Lower leg skin (tissue), 4 donors: ENCODE measurements at regions of chr2 and their contacts with region 1.

Region 1: GRCh38 chr2:27281855-27282559 is at the start of gene TRIM54:
- DNase-seq: no peak
- H3K4me3 ChIP-seq: no peak within 1 kb of the TSS
- CTCF ChIP-seq: no peak
- POLR2A ChIP-seq: no peak
- total RNA-seq, gene TRIM54: not detected

Region 2: GRCh38 chr2:26848336-26849055 is 433.5 kb before region 1 on chr2:
- intact Hi-C with region 1: no loop called
- DNase-seq: peak in 1 of 2 donors; percentile 81
- H3K4me3 ChIP-seq: no peak overlapping the region
- CTCF ChIP-seq: no peak
- POLR2A ChIP-seq: no peak

Region 3: DNA sequence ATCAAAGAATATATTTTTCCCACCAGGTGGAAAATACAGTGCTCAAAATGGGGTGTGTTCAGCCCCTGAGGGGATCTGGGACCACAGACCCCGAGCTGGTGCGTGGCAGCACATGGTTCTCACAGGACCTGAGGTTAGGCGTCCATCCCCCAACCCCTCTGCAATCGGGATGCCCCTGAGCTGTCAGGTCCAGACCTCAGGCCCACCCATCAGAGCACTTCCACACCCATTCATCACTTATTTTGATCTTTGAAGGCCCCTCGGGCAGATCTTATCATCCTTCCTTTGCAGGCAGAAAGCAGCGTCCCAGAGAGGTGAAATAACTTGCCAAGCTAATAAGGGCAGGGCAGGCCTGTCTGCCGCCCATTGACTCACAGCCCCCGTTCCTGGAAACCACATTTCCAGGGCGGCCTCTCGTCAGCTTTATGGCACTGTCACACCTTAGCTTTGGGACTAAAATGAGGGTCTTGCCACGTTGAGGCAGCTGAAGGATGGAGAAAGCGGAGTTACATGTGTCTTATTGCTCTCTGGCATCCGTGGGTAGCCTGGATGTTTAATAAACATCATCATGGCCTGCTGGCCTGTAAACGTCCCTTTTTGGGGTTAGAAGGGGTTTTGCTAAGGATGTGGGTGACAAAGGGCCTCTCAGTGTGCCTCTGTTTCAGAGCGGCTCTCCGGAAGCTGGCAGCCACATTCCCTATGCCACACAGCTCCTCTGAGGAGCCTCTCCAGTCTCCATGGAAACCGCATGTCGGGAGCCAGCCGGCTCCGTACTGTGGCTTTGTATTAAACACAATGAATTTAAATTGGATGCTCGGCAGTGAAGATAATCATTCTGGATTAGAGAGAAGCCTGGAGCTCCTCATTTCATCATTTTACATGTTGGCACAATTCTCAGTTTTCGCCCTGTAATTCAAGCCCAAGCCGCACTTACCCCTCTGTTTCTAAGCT is 369.8 kb before region 1 on chr2:
- intact Hi-C with region 1: no loop called
- DNase-seq: peak in 1 of 2 donors; percentile 36
- H3K4me3 ChIP-seq: no peak overlapping the region
- CTCF ChIP-seq: no peak
- POLR2A ChIP-seq: no peak

Region 4: DNA sequence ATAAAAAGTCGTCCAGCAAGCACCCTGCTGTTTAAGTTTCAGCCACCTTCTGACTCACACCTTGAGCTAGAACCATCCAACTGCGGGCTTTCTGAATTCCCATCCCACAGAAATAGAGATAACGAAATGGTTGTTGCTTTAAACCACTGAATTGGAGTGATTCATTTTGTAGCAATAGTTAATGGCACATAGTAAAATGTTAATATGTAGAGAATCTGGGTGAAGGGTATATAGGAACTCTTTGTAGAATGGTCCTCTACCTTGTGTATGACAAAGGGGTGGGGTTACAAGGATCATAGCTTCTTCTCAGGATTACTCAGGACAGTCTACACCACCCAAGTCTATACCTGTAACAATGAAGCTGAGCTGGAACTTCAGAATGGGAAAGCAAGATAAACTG is 314.0 kb before region 1 on chr2:
- intact Hi-C with region 1: no loop called
- DNase-seq: no peak
- H3K4me3 ChIP-seq: no peak overlapping the region
- CTCF ChIP-seq: no peak
- POLR2A ChIP-seq: no peak

Region 5: GRCh38 chr2:27102329-27102728 is 179.7 kb before region 1 on chr2:
- intact Hi-C with region 1: loop called (anchors 5 kb)
- DNase-seq: no peak
- H3K4me3 ChIP-seq: no peak overlapping the region
- CTCF ChIP-seq: no peak
- POLR2A ChIP-seq: no peak

Region 6: DNA sequence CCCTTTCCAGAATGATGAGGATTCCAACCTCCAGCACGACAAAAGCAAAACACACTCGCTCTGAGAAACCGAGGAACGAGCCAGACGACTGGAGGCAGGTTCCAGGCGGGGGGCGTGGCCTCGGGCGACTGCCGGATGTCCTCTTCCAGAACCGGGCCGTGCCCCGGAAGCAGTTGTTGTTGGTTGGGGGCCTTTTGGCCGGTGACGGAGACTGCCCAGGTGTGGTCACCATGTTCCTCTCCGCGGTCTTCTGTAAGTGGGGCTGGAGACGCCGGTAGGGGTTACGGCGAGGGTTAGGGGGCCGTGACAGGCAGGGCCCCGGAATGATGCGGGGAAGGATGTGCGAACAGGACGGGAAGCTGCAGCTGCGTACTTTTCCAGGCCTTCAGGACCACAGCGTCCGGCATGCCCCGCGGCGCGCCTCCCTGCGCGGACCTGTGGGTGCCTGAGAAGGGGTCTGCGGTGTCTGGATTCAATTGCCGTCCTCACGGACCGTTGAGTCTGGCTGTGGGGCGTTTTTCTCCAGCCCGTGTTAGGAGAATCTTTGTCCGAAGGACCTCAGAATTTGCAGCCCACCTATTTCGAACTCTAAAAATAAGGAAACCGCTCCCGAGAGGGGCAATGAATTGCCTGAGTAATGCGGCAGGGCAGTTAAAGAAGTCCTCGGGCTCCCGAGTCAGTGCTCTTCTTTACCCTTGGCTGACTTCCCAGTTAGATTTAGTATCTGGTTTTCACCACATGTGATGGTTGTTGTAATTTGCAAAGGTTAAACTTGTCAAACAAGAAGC is 489.7 kb after region 1 on chr2 and contains the start of gene MRPL33:
- intact Hi-C with region 1: no loop called
- DNase-seq: peak; percentile 93 to 99
- H3K4me3 ChIP-seq: peak within 1 kb of the TSS; percentile 67
- CTCF ChIP-seq: no peak
- POLR2A ChIP-seq: peak in 1 of 2 donors; percentile 18
- total RNA-seq, gene MRPL33: 43.3 to 64.9 (median 54.5) TPM